SK-N-SH (cell line): ENCODE measurements at regions of chr5 and their contacts with region 1.

Region 1: GRCh38 chr5:101678481-101679193 is 617.4 kb downstream of the SLCO4C1 start:
- DNase-seq: peak; percentile 43
- H3K4me3 ChIP-seq: no peak overlapping the region; a peak in 1 of 4 replicates
- H3K27ac ChIP-seq: no peak overlapping the region
- H3K4me1 ChIP-seq: peaks cover 0 to 7% of the 10 kb centered on the region in 2 experiments; a peak in 1 of 4 replicates
- H3K27me3 ChIP-seq: no peaks in the 10 kb centered on the region
- CTCF ChIP-seq: peak; percentile 94
- EP300 ChIP-seq: no peak
- RAD21 ChIP-seq: peak; percentile 92

Region 2: DNA sequence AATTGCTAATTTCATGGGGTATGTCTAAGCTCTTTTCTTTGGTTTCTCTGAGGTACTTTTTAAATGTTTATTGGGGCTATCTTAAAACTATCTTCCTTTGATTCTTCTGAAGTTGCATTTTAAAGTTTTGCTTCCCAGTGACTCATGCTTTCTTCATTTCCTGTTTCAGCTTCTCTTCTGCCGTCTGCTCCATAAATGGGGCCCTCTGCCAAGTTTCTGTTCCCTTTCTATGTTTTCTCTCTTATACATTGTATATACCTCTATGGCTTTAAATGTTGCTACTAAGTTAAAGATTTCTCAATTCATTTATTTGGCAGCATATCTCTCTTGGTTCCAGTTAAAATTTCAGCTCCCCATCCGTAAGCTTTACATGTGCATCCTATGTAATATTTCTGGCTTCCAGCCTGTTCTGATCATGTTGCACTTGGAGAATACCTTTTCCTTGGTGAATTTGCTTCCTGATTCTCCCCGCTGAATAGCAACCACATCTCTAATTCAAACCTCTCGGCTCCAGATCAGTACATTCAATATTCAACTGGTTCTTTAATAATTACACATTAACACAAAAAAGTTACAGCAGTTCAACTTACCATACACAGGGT is 900.9 kb before region 1 on chr5:
- CTCF ChIA-PET with region 1: interaction called, 13 read pairs
- POLR2A ChIA-PET with region 1: no interaction called
- DNase-seq: no peak
- H3K4me3 ChIP-seq: peak overlapping the region; percentile 23 to 42; a peak in 2 of 4 replicates
- H3K27ac ChIP-seq: peak overlapping the region; percentile 85 to 89
- H3K4me1 ChIP-seq: peaks cover 0 to 11% of the 10 kb centered on the region in 2 experiments; a peak in 2 of 4 replicates
- H3K27me3 ChIP-seq: no peaks in the 10 kb centered on the region
- CTCF ChIP-seq: no peak
- EP300 ChIP-seq: peak in 1 of 2 experiments; percentile 58; a peak in 1 of 4 replicates
- RAD21 ChIP-seq: no peak

Region 3: DNA sequence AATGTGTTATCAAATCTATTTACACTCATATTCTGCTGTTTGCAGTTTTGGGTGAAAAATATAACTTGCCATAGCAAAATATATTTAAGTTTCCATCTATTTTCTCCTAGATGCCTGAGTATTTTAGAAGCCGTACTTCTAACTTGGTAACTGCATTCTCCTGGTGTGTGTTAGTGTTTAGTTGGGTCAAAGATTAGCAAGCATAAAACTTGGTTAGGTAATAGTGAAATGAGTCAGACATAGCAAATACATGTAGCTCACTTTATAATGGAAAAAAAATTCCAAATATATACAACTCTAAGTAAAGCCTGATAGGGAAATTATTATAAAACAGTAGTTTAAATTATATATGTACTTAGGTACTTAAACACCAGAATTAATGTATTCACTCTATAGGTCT is 134.9 kb before region 1 on chr5:
- CTCF ChIA-PET with region 1: no interaction called
- POLR2A ChIA-PET with region 1: no interaction called
- DNase-seq: no peak
- H3K4me3 ChIP-seq: no peak overlapping the region
- H3K27ac ChIP-seq: no peak overlapping the region
- H3K4me1 ChIP-seq: no peaks in the 10 kb centered on the region
- H3K27me3 ChIP-seq: no peaks in the 10 kb centered on the region
- CTCF ChIP-seq: no peak
- EP300 ChIP-seq: no peak
- RAD21 ChIP-seq: no peak

Region 4: GRCh38 chr5:101605700-101606099 is 72.9 kb before region 1 on chr5:
- CTCF ChIA-PET with region 1: no interaction called
- POLR2A ChIA-PET with region 1: no interaction called
- DNase-seq: no peak
- H3K4me3 ChIP-seq: no peak overlapping the region
- H3K27ac ChIP-seq: no peak overlapping the region
- H3K4me1 ChIP-seq: no peaks in the 10 kb centered on the region
- H3K27me3 ChIP-seq: no peaks in the 10 kb centered on the region
- CTCF ChIP-seq: no peak
- EP300 ChIP-seq: no peak
- RAD21 ChIP-seq: no peak

Region 5: DNA sequence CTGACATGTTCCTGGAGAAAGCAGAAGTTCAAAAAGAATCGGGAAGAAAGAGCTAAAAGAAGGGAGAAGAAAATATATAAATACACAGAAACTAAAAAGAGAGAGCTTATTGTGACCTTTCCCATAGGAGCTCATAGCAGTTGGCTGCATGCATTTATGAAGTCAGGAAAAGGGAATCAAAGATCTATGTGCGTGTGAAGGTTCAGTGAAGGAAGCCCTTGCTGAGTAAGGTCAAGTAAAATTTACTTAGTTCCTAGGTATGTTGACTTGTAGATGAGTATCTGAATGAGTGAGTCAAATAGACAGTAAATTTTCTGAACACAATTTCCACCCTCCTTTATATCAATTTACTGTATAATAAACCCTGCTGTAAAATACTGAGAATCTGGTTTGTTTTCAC is 15.1 kb before region 1 on chr5:
- CTCF ChIA-PET with region 1: interaction called, 18 read pairs
- POLR2A ChIA-PET with region 1: no interaction called
- DNase-seq: no peak
- H3K4me3 ChIP-seq: no peak overlapping the region
- H3K27ac ChIP-seq: no peak overlapping the region
- H3K4me1 ChIP-seq: no peaks in the 10 kb centered on the region; a peak in 1 of 4 replicates
- H3K27me3 ChIP-seq: no peaks in the 10 kb centered on the region
- CTCF ChIP-seq: no peak
- EP300 ChIP-seq: no peak
- RAD21 ChIP-seq: no peak

Region 6: GRCh38 chr5:101751105-101751504 is 72.5 kb after region 1 on chr5:
- CTCF ChIA-PET with region 1: no interaction called
- POLR2A ChIA-PET with region 1: no interaction called
- DNase-seq: no peak
- H3K4me3 ChIP-seq: no peak overlapping the region
- H3K27ac ChIP-seq: no peak overlapping the region
- H3K4me1 ChIP-seq: no peaks in the 10 kb centered on the region
- H3K27me3 ChIP-seq: no peaks in the 10 kb centered on the region
- CTCF ChIP-seq: no peak
- EP300 ChIP-seq: no peak
- RAD21 ChIP-seq: no peak

Region 7: GRCh38 chr5:101969742-101970141 is 291.1 kb after region 1 on chr5:
- CTCF ChIA-PET with region 1: no interaction called
- POLR2A ChIA-PET with region 1: no interaction called
- DNase-seq: no peak
- H3K4me3 ChIP-seq: no peak overlapping the region
- H3K27ac ChIP-seq: no peak overlapping the region
- H3K4me1 ChIP-seq: no peaks in the 10 kb centered on the region
- H3K27me3 ChIP-seq: no peaks in the 10 kb centered on the region
- CTCF ChIP-seq: no peak
- EP300 ChIP-seq: no peak
- RAD21 ChIP-seq: no peak